T-cell (primary cell): ENCODE measurements at regions of chr20 and their contacts with region 1.

Region 1: GRCh38 chr20:44217342-44218092 is 6.9 kb upstream of the OSER1 start:
- DNase-seq: peak; percentile 38 to 88 (median 61)
- ATAC-seq: peak; percentile 50 to 66 (median 54)
- H3K4me3 ChIP-seq: peak overlapping the region; percentile 40 to 54
- H3K4me3 Mint-ChIP-seq: peak overlapping the region; percentile 78 to 85 (median 78)
- H3K27ac ChIP-seq: peak overlapping the region; percentile 76
- H3K27ac Mint-ChIP-seq: peak overlapping the region; percentile 95 to 96
- H3K4me1 ChIP-seq: peaks cover 39 to 52% of the 10 kb centered on the region in 2 experiments
- H3K4me1 Mint-ChIP-seq: peaks cover 65 to 77% (median 75%) of the 10 kb centered on the region in 3 donors
- H3K27me3 ChIP-seq: no peaks in the 10 kb centered on the region
- H3K27me3 Mint-ChIP-seq: no peaks in the 10 kb centered on the region

Region 2: DNA sequence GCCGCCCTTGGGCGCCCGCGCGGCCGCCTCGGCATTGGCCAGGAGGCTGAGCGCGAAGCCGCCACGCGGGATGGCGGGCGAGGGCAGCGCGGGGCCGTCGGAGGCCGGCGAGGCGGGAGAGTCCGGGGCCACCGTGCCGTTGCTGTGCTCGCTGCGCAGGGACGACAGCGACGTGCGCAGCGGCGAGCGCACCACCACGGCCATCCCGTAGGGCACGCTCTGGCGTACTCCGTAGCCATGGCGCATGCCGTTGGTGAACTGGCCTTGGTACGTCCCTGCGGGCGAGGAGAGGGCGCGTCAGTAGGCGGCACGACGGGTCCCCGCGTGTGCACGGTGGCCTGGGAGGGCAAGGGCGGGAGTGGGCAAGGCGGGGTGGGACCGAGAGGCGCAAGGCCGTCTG is 57.4 kb before region 1 on chr20:
- CTCF ChIA-PET with region 1: no interaction called
- POLR2A ChIA-PET with region 1: no interaction called
- DNase-seq: no peak
- ATAC-seq: no peak
- H3K4me3 ChIP-seq: no peak overlapping the region
- H3K4me3 Mint-ChIP-seq: no peak overlapping the region
- H3K27ac ChIP-seq: no peak overlapping the region
- H3K27ac Mint-ChIP-seq: no peak overlapping the region
- H3K4me1 ChIP-seq: no peaks in the 10 kb centered on the region
- H3K4me1 Mint-ChIP-seq: no peaks in the 10 kb centered on the region
- H3K27me3 ChIP-seq: peaks cover 4 to 14% of the 10 kb centered on the region in 2 experiments
- H3K27me3 Mint-ChIP-seq: peaks cover 37 to 46% of the 10 kb centered on the region in 2 donors

Region 3: DNA sequence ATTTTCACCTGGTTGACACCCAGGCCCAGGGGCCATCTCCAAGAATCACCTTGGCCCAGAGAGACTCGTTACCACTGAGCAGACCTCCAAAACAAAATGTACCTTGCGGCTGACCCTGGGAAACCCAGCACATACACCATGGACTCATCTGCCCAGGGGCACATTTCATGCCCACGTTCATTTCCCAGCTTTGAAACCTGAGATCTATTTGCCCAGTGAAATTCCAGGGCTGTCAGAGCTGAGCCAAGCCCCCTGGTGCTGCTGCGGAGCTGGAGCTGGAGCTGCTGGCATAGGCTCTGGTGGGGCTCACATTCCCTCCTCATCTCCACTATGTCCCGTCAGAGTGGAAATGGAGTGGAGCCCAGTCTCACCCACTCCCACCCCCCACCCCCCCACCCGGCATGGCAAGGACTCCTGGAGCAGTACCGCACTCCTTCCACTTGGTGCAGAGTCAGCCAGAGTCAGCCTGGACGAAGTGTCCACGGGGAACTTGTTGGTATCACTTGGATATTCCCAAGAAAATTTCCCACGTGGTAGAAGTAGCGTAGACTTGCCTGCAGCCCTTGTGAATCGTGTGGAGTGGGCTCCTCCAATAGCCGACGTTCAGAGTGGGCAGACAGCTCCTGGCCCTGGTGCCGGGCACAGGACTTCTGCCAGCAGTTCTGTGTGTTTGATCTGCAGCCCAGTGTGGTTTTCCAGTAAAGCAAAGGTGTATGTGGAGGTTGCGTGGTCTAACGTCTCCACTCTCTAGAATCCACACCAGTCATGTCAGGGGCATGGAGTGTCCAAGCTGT is 11.1 kb after region 1 on chr20:
- CTCF ChIA-PET with region 1: interaction called in 1 of 2 experiments, 10 read pairs
- POLR2A ChIA-PET with region 1: interaction called in 1 of 2 experiments, 3 read pairs
- DNase-seq: no peak
- ATAC-seq: no peak
- H3K4me3 ChIP-seq: no peak overlapping the region
- H3K4me3 Mint-ChIP-seq: no peak overlapping the region
- H3K27ac ChIP-seq: no peak overlapping the region
- H3K27ac Mint-ChIP-seq: no peak overlapping the region
- H3K4me1 ChIP-seq: peaks cover 0 to 8% of the 10 kb centered on the region in 2 experiments
- H3K4me1 Mint-ChIP-seq: peaks cover 6 to 9% (median 6%) of the 10 kb centered on the region in 3 donors
- H3K27me3 ChIP-seq: no peaks in the 10 kb centered on the region
- H3K27me3 Mint-ChIP-seq: no peaks in the 10 kb centered on the region

Region 4: DNA sequence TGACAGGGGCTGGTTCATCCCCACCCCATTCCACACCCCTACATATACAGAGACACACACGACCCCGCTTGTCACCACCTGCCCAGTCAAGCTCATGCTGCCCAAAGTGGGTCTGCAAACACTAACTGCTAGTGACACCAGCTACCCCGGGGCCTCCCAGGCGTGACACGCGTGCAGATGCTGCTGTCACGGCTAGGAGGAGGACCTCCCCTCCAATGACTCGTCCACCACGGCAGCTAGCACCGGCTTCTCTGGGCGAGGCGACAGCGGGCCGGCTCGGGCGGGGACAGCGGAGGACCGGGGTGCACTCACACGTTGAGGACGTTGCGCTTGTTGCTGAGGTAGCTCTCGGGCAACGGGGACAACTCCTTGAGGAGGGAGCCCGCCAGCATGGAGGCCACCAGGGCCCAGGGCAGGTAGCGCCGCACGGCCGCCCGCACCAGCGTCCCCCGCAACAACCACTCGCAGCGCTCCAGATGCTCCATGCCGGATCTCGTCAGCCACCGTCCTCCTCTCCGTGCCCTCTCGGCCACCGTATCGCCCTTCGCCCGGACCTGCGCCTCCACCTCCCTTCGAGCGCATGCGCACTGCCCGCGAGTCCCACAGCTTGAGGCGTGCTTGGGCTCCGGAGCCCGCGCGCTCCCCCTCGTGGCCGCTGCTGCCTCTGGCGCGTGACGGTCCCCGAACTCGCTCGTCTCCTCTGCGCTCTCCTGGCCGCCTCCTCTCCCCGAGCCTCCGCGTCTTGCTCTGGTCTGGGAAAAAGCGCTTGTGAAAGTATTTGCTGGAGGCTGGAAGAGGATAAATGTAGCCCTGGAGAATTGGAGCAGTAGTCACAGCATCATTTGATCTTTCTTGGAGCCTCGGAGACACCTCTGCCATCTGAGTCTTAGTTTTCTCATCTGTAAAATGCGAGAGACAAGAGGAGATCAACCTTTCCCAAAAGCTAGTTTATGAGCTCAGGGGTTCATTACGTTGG is 93.4 kb after region 1 on chr20 and contains the start of gene FITM2:
- CTCF ChIA-PET with region 1: interaction called, 111 to 246 read pairs
- POLR2A ChIA-PET with region 1: interaction called, 4 to 7 read pairs
- DNase-seq: peak; percentile 93 to 99 (median 96)
- ATAC-seq: peak; percentile 92 to 98 (median 95)
- H3K4me3 ChIP-seq: peak within 1 kb of the TSS; percentile 68 to 95
- H3K4me3 Mint-ChIP-seq: peak within 1 kb of the TSS; percentile 86 to 92 (median 91)
- H3K27ac ChIP-seq: peak within 1 kb of the TSS; percentile 5
- H3K27ac Mint-ChIP-seq: peak within 1 kb of the TSS; percentile 83 to 87
- H3K4me1 ChIP-seq: peaks cover 7 to 23% of the 10 kb centered on the region in 2 experiments
- H3K4me1 Mint-ChIP-seq: peaks cover 20 to 29% (median 24%) of the 10 kb centered on the region in 3 donors
- H3K27me3 ChIP-seq: peaks cover 0 to 3% of the 10 kb centered on the region in 2 experiments
- H3K27me3 Mint-ChIP-seq: no peaks in the 10 kb centered on the region
- total RNA-seq, gene FITM2: 4.5 to 7.4 (median 6.2) TPM

Region 5: GRCh38 chr20:44324343-44324742 is 106.8 kb after region 1 on chr20:
- CTCF ChIA-PET with region 1: interaction called, 3 to 30 read pairs
- POLR2A ChIA-PET with region 1: no interaction called
- DNase-seq: no peak
- ATAC-seq: no peak
- H3K4me3 ChIP-seq: no peak overlapping the region
- H3K4me3 Mint-ChIP-seq: no peak overlapping the region
- H3K27ac ChIP-seq: no peak overlapping the region
- H3K27ac Mint-ChIP-seq: no peak overlapping the region
- H3K4me1 ChIP-seq: peaks cover 0 to 6% of the 10 kb centered on the region in 2 experiments
- H3K4me1 Mint-ChIP-seq: peaks cover 0 to 2% (median 0%) of the 10 kb centered on the region in 3 donors
- H3K27me3 ChIP-seq: peaks cover 0 to 23% of the 10 kb centered on the region in 2 experiments
- H3K27me3 Mint-ChIP-seq: peaks cover 0 to 6% of the 10 kb centered on the region in 2 donors

Region 6: DNA sequence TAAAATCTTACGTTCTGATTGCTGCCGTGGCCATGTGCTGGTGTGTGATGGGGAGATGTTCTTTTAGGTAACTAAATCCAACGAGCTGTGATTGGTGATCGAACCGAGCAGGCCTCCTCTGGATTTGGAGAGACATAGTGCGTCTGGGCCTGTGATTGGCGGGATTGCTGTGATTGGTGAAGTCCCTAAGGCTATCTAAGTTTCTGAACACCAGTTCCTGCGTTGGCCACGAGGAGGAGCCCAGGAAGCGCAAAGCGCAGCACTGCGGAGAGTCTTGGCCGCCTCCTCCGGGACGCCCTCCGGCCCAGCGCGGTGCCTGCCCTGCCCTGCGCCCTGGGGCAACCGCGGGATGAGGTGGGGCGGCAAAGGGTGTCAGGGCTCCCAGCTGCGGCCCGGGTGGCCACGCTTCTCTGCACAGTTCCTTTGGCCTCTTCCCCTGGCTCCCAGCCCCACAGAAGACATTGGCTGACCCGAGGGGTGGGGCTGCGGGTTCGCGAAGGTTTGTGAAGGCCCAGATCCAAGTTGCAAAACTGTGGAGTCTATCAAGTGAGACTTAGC is 171.0 kb after region 1 on chr20:
- CTCF ChIA-PET with region 1: interaction called, 6 to 15 read pairs
- POLR2A ChIA-PET with region 1: no interaction called
- DNase-seq: peak; percentile 19 to 75 (median 54)
- ATAC-seq: peak; percentile 69 to 89 (median 78)
- H3K4me3 ChIP-seq: no peak overlapping the region
- H3K4me3 Mint-ChIP-seq: peak overlapping the region in 1 of 3 donors; percentile 40
- H3K27ac ChIP-seq: no peak overlapping the region
- H3K27ac Mint-ChIP-seq: no peak overlapping the region
- H3K4me1 ChIP-seq: peaks cover 0 to 10% of the 10 kb centered on the region in 2 experiments
- H3K4me1 Mint-ChIP-seq: peaks cover 9 to 19% (median 10%) of the 10 kb centered on the region in 3 donors
- H3K27me3 ChIP-seq: peaks cover 0 to 33% of the 10 kb centered on the region in 2 experiments
- H3K27me3 Mint-ChIP-seq: peaks cover 11 to 12% of the 10 kb centered on the region in 2 donors

Region 7: DNA sequence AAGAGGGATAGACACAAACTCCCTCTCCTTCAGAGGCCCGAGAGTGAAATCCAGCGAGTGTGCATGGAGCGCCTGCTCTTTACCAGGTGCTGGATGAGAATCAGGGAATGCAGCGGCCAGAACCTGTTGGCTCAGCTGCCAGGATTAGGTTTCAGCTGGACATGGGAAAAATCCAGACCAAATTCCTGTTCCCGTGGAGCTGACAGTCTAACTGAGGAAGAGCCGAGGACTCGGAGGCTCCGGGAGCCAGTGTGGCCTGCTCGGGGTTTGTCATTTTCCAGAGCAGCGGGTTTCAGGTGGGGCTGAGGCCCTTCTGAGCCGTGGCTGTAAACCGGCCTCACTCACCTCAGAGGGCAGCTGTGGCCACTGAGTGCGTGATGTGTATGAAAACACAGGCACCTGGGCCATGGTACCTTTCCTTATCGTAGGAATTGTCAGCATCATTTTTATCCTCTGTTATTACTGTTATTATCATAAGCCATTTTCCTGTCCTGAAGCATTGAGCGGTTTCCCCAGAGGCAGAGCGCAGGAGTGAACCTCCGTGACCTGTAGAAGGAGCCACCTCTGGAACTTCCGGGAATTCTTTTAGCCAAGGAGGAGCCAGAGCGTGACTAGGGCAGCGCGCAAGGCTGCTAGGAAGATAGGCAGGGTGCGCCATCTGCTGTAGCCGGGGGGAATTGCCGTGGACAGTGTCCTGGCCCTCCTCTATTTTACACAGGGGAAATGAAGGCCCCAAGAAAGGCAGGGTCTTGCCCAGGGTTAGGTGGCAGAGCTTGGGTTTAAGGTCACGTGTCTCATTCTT is 392.2 kb after region 1 on chr20:
- CTCF ChIA-PET with region 1: interaction called in 1 of 2 experiments, 13 read pairs
- POLR2A ChIA-PET with region 1: no interaction called
- DNase-seq: peak; percentile 50 to 91 (median 79)
- ATAC-seq: peak; percentile 78 to 92 (median 86)
- H3K4me3 ChIP-seq: peak overlapping the region in 1 of 2 donors; percentile 4
- H3K4me3 Mint-ChIP-seq: peak overlapping the region in 2 of 3 donors; percentile 44 to 59
- H3K27ac ChIP-seq: peak overlapping the region; percentile 77
- H3K27ac Mint-ChIP-seq: peak overlapping the region; percentile 91 to 98
- H3K4me1 ChIP-seq: peaks cover 19 to 34% of the 10 kb centered on the region in 2 experiments
- H3K4me1 Mint-ChIP-seq: peaks cover 32 to 35% (median 32%) of the 10 kb centered on the region in 3 donors
- H3K27me3 ChIP-seq: no peaks in the 10 kb centered on the region
- H3K27me3 Mint-ChIP-seq: no peaks in the 10 kb centered on the region